ENCODE measurements at regions of chr5 and their contacts with region 1.

Region 1: DNA sequence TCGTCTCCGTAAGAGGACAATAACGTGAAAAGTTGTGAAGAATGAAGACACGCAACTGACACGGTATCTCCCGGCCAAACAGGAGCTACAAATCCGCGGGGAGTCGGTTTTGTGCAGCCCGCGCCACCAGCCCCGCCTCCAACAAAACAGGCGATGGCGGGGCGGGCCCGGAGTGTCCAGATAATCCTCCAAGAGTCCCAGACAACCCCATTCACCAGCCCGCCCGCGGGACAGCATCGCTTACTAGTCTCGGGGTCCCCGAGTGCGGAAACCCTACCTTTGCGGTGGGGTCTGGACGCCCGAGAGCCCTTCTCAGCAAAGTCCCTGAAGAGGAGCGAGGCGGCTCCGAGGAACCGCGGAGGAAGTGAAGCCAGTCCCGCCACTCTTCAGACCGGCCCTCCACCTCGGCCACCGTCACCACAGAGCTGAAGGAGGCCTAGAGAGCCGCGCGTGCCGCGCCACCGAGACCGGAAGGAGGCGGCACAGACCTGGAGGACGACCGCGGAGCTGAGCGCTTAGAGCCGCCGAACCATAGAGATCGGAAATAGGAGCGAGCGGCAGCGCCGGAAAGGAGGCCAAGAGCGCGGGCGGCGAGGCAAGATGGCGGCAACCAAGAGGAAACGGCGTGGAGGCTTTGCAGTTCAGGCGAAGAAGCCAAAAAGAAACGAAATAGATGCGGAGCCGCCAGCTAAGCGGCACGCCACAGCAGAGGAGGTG is at the starts of genes BRIX1 and RAD1:
- DNase-seq: peak; percentile 98
- ATAC-seq: peak; percentile 98
- H3K4me3 Mint-ChIP-seq: no peak within 1 kb of the TSS
- H3K27ac Mint-ChIP-seq: peak within 1 kb of the TSS; percentile 60
- H3K4me1 Mint-ChIP-seq: peaks cover 37% of the 10 kb centered on the region
- H3K27me3 Mint-ChIP-seq: no peaks in the 10 kb centered on the region
- total RNA-seq, gene BRIX1: 81.2 to 104 TPM
- total RNA-seq, gene RAD1: 38.7 to 43.0 TPM

Region 2: GRCh38 chr5:34007621-34008600 is 907.4 kb before region 1 on chr5 and contains the start of gene AMACR:
- CTCF ChIA-PET with region 1: no interaction called
- POLR2A ChIA-PET with region 1: no interaction called
- intact Hi-C with region 1: loop called (anchors 2 to 10 kb)
- DNase-seq: peak; percentile 96
- ATAC-seq: peak; percentile 95
- H3K4me3 Mint-ChIP-seq: peak within 1 kb of the TSS; percentile 77
- H3K27ac Mint-ChIP-seq: peak within 1 kb of the TSS; percentile 90
- H3K4me1 Mint-ChIP-seq: peaks cover 32% of the 10 kb centered on the region
- H3K27me3 Mint-ChIP-seq: no peaks in the 10 kb centered on the region
- total RNA-seq, gene AMACR: 3.3 to 6.0 TPM

Region 3: GRCh38 chr5:34639852-34640605 is 275.3 kb before region 1 on chr5:
- CTCF ChIA-PET with region 1: no interaction called
- POLR2A ChIA-PET with region 1: no interaction called
- intact Hi-C with region 1: no loop called
- DNase-seq: no peak
- ATAC-seq: no peak
- H3K4me3 Mint-ChIP-seq: no peak overlapping the region
- H3K27ac Mint-ChIP-seq: no peak overlapping the region
- H3K4me1 Mint-ChIP-seq: no peaks in the 10 kb centered on the region
- H3K27me3 Mint-ChIP-seq: peaks cover 12% of the 10 kb centered on the region

Region 4: GRCh38 chr5:34838785-34839714 is 76.2 kb before region 1 on chr5 and contains the start of gene TTC23L:
- CTCF ChIA-PET with region 1: interaction called, 3 read pairs
- POLR2A ChIA-PET with region 1: interaction called, 14 read pairs
- intact Hi-C with region 1: loop called (anchors 1 kb)
- DNase-seq: peak; percentile 95
- ATAC-seq: peak; percentile 95
- H3K4me3 Mint-ChIP-seq: peak within 1 kb of the TSS; percentile 80
- H3K27ac Mint-ChIP-seq: peak within 1 kb of the TSS; percentile 95
- H3K4me1 Mint-ChIP-seq: peaks cover 13% of the 10 kb centered on the region
- H3K27me3 Mint-ChIP-seq: no peaks in the 10 kb centered on the region
- total RNA-seq, gene TTC23L: 0.26 to 0.30 TPM

Region 5: GRCh38 chr5:34929150-34929719 is 13.9 kb after region 1 on chr5 and contains the start of gene DNAJC21:
- CTCF ChIA-PET with region 1: interaction called, 23 read pairs
- POLR2A ChIA-PET with region 1: interaction called, 84 read pairs
- intact Hi-C with region 1: loop called (anchors 1 kb)
- DNase-seq: peak; percentile 99
- ATAC-seq: peak; percentile 95
- H3K4me3 Mint-ChIP-seq: peak within 1 kb of the TSS; percentile 90
- H3K27ac Mint-ChIP-seq: peak within 1 kb of the TSS; percentile 93
- H3K4me1 Mint-ChIP-seq: peaks cover 43% of the 10 kb centered on the region
- H3K27me3 Mint-ChIP-seq: no peaks in the 10 kb centered on the region
- total RNA-seq, gene DNAJC21: 58.5 to 58.6 TPM

Region 6: GRCh38 chr5:35313291-35313690 is 398.0 kb after region 1 on chr5:
- CTCF ChIA-PET with region 1: no interaction called
- POLR2A ChIA-PET with region 1: no interaction called
- intact Hi-C with region 1: no loop called
- DNase-seq: no peak
- ATAC-seq: no peak
- H3K4me3 Mint-ChIP-seq: no peak overlapping the region
- H3K27ac Mint-ChIP-seq: no peak overlapping the region
- H3K4me1 Mint-ChIP-seq: peaks cover 16% of the 10 kb centered on the region
- H3K27me3 Mint-ChIP-seq: peaks cover 23% of the 10 kb centered on the region

Region 7: DNA sequence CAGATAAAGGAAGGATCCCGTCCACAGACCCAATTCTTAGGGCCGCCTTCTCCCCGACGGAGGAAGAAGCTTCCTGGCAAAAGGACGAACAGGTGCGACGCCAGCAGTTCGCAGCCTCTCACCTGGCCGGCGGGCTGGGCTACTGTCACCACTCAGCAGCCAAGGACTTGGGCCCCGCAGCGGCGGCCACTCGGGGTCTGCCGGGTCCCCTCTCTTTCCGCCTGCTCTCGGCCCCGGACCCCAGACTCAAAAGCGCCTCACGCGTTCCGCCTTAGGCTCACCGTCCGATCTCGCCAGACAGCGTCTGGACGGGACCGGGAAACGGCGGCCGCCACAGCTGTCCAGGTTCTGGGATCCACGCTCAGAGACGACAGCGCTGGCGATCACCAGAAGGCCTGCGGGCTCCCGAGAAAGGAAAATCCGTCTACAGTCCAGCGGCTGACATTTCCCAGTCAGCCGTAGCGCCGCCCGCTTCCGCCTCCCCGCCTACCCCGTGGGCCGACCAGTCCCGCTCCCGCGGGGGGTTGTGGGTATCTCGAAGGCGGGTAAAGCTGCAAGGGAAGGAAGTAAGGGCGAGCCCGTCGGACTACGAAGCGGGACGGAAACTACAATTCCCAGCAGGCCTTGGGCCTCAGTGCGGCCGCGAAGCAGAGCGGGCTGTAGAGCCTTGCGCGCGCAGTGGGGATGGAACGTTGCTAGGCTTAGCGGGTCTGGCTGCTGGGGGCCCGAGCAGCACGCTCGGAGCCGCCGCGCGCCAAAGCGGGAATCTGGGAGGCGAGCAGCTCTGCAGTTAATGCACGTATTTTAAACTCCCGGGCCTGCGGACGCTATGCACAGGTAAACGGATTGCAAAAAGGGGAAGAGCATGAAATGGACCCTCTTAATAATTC is 1236.4 kb after region 1 on chr5 and contains the starts of genes LMBRD2 and SKP2:
- CTCF ChIA-PET with region 1: no interaction called
- POLR2A ChIA-PET with region 1: no interaction called
- intact Hi-C with region 1: loop called in 1 of 2 experiments (anchors 2 kb)
- DNase-seq: peak; percentile 98
- ATAC-seq: peak; percentile 99
- H3K4me3 Mint-ChIP-seq: peak within 1 kb of the TSS; percentile 97
- H3K27ac Mint-ChIP-seq: peak within 1 kb of the TSS; percentile 91
- H3K4me1 Mint-ChIP-seq: peaks cover 55% of the 10 kb centered on the region
- H3K27me3 Mint-ChIP-seq: no peaks in the 10 kb centered on the region
- total RNA-seq, gene LMBRD2: 9.3 to 10.2 TPM
- total RNA-seq, gene SKP2: 48.0 to 56.8 TPM

Measured in activated CD4-positive, alpha-beta T cell treated with anti-CD3 and anti-CD28 coated beads for 36 hours (primary cell).